WTC11 (cell line): ENCODE measurements at regions of chr13 and their contacts with region 1.

Region 1: DNA sequence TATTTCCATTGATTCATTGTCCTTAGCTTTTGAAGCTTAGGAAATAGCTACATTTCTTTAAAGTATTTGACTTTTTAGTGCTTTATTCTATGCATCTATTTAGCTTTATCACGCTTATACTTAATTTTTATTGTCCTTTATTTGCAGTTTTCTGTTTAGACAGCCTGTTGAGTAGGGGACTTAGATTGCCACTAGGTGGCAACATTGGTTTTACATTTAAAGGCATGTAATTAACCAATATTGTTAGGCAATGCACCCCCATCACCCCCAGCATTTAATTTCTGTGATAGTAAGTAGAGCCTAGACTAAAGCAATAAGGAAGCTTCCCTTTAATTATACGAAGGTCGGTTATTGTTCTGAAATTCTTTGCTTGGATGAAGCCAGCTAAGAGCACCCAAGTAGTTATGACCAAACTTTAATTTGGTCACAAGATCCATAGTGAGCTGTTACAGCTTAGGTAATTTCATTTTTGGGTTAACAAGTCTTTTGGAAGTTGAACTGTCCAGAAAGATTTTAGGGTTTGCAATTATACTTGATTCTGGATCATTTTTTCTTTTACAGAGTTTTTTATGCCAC is 36.5 kb downstream of the B3GLCT start:
- DNase-seq: no peak
- ATAC-seq: peak; percentile 65; the same call in 1 of the 2 replicates
- H3K4me3 Mint-ChIP-seq: no peak overlapping the region
- H3K27ac Mint-ChIP-seq: no peak overlapping the region
- H3K4me1 Mint-ChIP-seq: no peaks in the 10 kb centered on the region
- H3K27me3 Mint-ChIP-seq: no peaks in the 10 kb centered on the region
- CTCF ChIP-seq: no peak; the same call in none of the 2 replicates

Region 2: GRCh38 chr13:31073859-31074718 is 162.2 kb before region 1 on chr13:
- CTCF ChIA-PET with region 1: no interaction called
- POLR2A ChIA-PET with region 1: no interaction called
- DNase-seq: no peak
- ATAC-seq: no peak
- H3K4me3 Mint-ChIP-seq: no peak overlapping the region
- H3K27ac Mint-ChIP-seq: no peak overlapping the region
- H3K4me1 Mint-ChIP-seq: peaks cover 23% of the 10 kb centered on the region
- H3K27me3 Mint-ChIP-seq: no peaks in the 10 kb centered on the region; the same call in none of the 2 replicates
- CTCF ChIP-seq: no peak

Region 3: DNA sequence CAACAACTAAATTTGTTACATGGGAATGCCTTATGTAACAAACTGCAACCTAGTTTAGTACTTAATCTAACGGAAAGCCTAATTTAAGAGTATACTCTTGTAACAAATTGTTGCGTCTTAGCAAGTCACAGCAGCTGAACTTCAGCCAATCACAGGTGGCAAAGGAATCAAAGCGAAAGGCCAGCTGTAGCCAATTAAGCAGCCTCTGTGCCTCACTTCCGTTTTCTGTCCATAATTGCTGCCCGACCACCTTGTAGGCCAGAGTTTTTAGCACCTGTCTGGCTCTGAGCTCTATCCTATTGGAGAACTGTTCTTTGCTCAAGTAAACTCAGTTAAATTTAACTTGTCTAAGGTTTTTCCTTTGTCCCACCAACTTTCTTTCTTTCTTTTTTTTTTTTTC is 56.5 kb before region 1 on chr13:
- CTCF ChIA-PET with region 1: no interaction called
- POLR2A ChIA-PET with region 1: no interaction called
- DNase-seq: no peak
- ATAC-seq: no peak
- H3K4me3 Mint-ChIP-seq: no peak overlapping the region
- H3K27ac Mint-ChIP-seq: no peak overlapping the region
- H3K4me1 Mint-ChIP-seq: peaks cover 13% of the 10 kb centered on the region
- H3K27me3 Mint-ChIP-seq: peaks cover 3% of the 10 kb centered on the region; the same call in 1 of the 2 replicates
- CTCF ChIP-seq: no peak

Region 4: GRCh38 chr13:31372454-31372853 is 136.2 kb after region 1 on chr13:
- CTCF ChIA-PET with region 1: interaction called, 11 read pairs
- POLR2A ChIA-PET with region 1: no interaction called
- DNase-seq: no peak
- ATAC-seq: peak; percentile 69
- H3K4me3 Mint-ChIP-seq: no peak overlapping the region
- H3K27ac Mint-ChIP-seq: no peak overlapping the region
- H3K4me1 Mint-ChIP-seq: no peaks in the 10 kb centered on the region
- H3K27me3 Mint-ChIP-seq: no peaks in the 10 kb centered on the region
- CTCF ChIP-seq: no peak

Region 5: GRCh38 chr13:31409678-31410356 is 173.5 kb after region 1 on chr13:
- CTCF ChIA-PET with region 1: interaction called, 16 read pairs
- POLR2A ChIA-PET with region 1: interaction called, 3 read pairs
- DNase-seq: no peak
- ATAC-seq: peak; percentile 24; the same call in 1 of the 2 replicates
- H3K4me3 Mint-ChIP-seq: no peak overlapping the region
- H3K27ac Mint-ChIP-seq: no peak overlapping the region
- H3K4me1 Mint-ChIP-seq: no peaks in the 10 kb centered on the region
- H3K27me3 Mint-ChIP-seq: no peaks in the 10 kb centered on the region
- CTCF ChIP-seq: no peak

Region 6: GRCh38 chr13:31424117-31424729 is 187.9 kb after region 1 on chr13:
- CTCF ChIA-PET with region 1: interaction called, 31 read pairs
- POLR2A ChIA-PET with region 1: no interaction called
- DNase-seq: peak; percentile 82
- ATAC-seq: peak; percentile 97
- H3K4me3 Mint-ChIP-seq: no peak overlapping the region
- H3K27ac Mint-ChIP-seq: no peak overlapping the region
- H3K4me1 Mint-ChIP-seq: peaks cover 8% of the 10 kb centered on the region
- H3K27me3 Mint-ChIP-seq: no peaks in the 10 kb centered on the region
- CTCF ChIP-seq: peak; percentile 64

Region 7: DNA sequence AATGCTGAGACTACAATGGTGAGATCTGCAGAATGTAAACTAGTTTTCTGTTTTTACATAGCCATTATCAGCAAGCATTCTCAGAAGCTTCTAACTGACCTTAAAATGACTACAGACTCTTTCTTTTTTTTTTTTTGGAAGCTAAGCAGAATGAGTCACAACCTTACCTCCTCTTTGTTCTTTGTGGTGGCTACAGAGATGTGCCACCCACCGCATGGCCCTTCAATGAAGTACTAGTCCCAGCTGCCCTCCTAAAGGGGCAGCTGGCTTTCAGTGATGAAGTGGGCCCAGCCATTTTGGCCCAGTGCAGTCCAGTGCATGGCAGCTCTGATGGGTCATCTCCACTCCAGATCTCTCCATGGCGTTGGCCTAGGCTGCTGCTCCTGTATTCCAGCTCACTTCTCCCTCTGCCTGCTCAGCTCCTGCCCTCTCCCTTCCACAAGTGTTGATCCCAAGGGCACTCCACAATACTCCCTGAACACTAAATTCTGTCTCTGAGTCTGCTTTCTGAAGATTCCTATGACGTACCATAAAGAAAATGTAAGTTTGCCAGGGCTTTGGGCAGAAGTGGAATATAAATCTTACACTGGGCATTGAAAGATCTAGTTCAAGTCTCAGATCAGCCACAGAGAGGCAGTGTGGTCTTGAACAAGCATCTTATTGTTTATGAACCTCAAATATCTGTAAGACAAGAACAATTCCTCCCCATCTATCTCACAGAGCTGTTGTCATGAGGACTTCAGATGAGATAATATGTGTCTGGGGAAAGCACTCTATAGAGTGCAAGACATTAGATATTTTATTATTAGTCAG is 588.6 kb after region 1 on chr13:
- CTCF ChIA-PET with region 1: no interaction called
- POLR2A ChIA-PET with region 1: no interaction called
- DNase-seq: no peak
- ATAC-seq: no peak; the same call in 1 of the 2 replicates
- H3K4me3 Mint-ChIP-seq: no peak overlapping the region
- H3K27ac Mint-ChIP-seq: no peak overlapping the region
- H3K4me1 Mint-ChIP-seq: peaks cover 28% of the 10 kb centered on the region
- H3K27me3 Mint-ChIP-seq: no peaks in the 10 kb centered on the region
- CTCF ChIP-seq: no peak